Right ventricle myocardium inferior (tissue), 1 donor: ENCODE measurements at regions of chr17 and their contacts with region 1.

Region 1: GRCh38 chr17:38903404-38903803 is 22.0 kb upstream of the LASP1NB start:
- DNase-seq: no peak
- ATAC-seq: no peak

Region 2: DNA sequence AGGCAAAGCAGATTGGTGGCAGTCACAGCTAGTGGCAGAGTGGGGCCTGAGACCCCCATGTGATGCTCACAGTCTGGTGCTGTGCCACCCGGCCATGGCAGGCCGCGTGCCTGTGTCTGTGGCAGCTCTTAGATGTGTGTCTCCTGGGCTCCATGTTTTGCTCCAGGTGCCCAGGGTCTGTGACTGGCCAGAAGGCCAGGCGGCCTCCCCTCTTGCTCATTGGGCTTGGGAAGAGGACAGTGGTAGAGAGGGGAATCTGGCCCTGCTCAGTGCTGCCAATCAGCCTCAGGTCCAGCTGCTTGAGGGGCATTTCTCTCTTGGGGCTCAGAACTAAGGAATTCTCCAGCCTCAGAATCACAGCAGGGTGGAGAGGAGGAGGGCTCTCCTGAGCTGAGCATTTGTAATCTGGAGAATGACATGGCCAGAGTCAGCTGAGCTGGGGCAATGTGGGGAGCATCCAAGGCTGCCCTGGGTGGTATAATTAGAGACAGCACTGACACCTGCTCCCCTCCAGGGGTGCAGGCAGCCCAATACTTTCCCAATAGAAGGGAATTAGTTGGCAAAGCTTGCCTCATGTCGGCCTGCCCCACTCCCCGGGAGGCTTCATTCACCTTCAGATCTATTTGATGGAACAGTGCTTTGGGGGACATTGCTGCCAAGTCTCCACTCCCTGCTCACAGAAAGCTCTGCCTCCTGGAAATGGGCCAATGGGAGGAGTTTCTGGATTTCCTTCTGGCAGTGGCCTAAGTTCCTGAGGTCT is 19.3 kb after region 1 on chr17:
- intact Hi-C with region 1: loop called (anchors 2 kb)
- DNase-seq: no peak
- ATAC-seq: peak; percentile 60